ENCODE measurements at regions of chr9 and their contacts with region 1.

Region 1: DNA sequence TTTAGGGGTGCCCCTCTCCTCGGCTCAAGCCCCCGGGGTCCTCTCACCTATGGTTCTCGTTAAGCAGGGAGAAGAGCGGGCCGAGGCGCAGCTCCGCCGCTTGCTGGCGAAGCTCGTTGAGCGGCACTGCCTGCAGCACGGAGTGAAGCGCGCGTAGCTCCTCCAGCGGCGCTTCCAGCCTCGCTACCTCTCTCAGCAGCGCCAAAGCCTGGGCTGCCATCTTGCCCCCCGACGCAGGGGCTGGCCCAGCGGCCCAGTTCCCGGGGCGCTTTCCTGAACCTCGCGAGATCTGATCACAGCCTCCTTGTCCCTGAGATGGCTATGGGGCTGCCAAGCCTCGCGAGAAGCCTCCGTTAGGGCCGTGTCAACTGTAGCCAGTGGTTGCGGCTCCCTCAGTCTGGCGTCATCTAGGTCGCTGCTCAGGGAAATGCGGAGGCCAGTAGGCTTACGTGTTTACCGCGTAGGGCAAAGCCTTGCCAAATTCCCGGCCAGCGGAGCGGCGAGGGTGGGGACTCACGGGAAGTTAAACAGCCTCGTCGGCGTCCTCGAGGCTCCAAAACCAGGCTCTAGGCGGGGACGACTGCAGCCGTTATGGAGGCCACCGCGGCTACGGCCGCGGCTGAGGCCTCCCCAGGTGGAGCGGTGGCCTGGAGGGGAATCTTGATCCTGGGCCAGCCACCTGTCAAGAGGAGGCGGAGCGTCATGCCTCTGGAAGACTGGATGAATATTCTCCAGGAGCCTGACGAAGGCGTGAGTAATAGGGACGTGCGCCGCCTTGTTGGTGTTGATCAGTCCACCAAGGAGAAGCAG is at the start of gene PSMD5:
- DNase-seq: peak; percentile 100
- H3K4me3 Mint-ChIP-seq: peak within 1 kb of the TSS; percentile 95
- H3K27ac Mint-ChIP-seq: peak within 1 kb of the TSS; percentile 95
- H3K4me1 Mint-ChIP-seq: peaks cover 81% of the 10 kb centered on the region
- H3K27me3 Mint-ChIP-seq: no peaks in the 10 kb centered on the region
- total RNA-seq, gene PSMD5: 62.1 to 63.5 TPM

Region 2: GRCh38 chr9:120555839-120556238 is 287.1 kb before region 1 on chr9:
- CTCF ChIA-PET with region 1: no interaction called
- intact Hi-C with region 1: no loop called
- DNase-seq: no peak
- H3K4me3 Mint-ChIP-seq: no peak overlapping the region
- H3K27ac Mint-ChIP-seq: no peak overlapping the region
- H3K4me1 Mint-ChIP-seq: peaks cover 5% of the 10 kb centered on the region
- H3K27me3 Mint-ChIP-seq: no peaks in the 10 kb centered on the region

Region 3: GRCh38 chr9:120792898-120793765 is 49.8 kb before region 1 on chr9 and contains the start of gene FBXW2:
- CTCF ChIA-PET with region 1: no interaction called
- intact Hi-C with region 1: loop called (anchors 1 kb)
- DNase-seq: peak; percentile 92
- H3K4me3 Mint-ChIP-seq: peak within 1 kb of the TSS; percentile 88
- H3K27ac Mint-ChIP-seq: peak within 1 kb of the TSS; percentile 92
- H3K4me1 Mint-ChIP-seq: peaks cover 46% of the 10 kb centered on the region
- H3K27me3 Mint-ChIP-seq: no peaks in the 10 kb centered on the region
- total RNA-seq, gene FBXW2: 60.8 to 64.4 TPM

Region 4: GRCh38 chr9:120875954-120876841 is 33.3 kb after region 1 on chr9:
- CTCF ChIA-PET with region 1: interaction called, 4 read pairs
- intact Hi-C with region 1: loop called (anchors 1 kb)
- DNase-seq: peak; percentile 98
- H3K4me3 Mint-ChIP-seq: peak overlapping the region; percentile 85
- H3K27ac Mint-ChIP-seq: peak overlapping the region; percentile 98
- H3K4me1 Mint-ChIP-seq: peaks cover 75% of the 10 kb centered on the region
- H3K27me3 Mint-ChIP-seq: no peaks in the 10 kb centered on the region

Region 5: DNA sequence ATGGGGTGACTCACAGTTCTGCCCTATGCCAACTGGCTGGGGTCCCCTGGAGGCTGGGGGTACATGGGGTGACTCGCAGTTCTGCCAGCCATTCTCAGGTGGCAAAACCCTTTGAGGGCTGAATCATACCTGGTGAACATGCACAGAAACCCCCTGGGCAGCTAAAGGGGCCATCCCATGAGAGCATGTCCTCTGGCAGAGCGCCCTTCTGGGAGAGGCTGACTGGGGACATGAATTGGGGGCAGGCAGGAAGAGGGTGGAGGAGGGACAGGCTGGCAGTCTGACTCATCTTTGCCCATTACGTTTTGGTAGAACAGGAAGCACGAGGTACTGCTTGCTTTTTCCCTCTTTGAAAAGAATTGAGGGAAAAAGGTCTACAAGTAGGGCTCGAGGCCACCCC is 67.0 kb after region 1 on chr9:
- CTCF ChIA-PET with region 1: interaction called, 3 read pairs
- intact Hi-C with region 1: loop called (anchors 1 kb)
- DNase-seq: peak; percentile 89
- H3K4me3 Mint-ChIP-seq: no peak overlapping the region
- H3K27ac Mint-ChIP-seq: peak overlapping the region; percentile 94
- H3K4me1 Mint-ChIP-seq: peaks cover 91% of the 10 kb centered on the region
- H3K27me3 Mint-ChIP-seq: no peaks in the 10 kb centered on the region

Region 6: GRCh38 chr9:120965344-120966012 is 122.6 kb after region 1 on chr9:
- CTCF ChIA-PET with region 1: no interaction called
- intact Hi-C with region 1: no loop called
- DNase-seq: no peak
- H3K4me3 Mint-ChIP-seq: no peak overlapping the region
- H3K27ac Mint-ChIP-seq: no peak overlapping the region
- H3K4me1 Mint-ChIP-seq: no peaks in the 10 kb centered on the region
- H3K27me3 Mint-ChIP-seq: no peaks in the 10 kb centered on the region

Region 7: GRCh38 chr9:121074635-121075385 is 231.9 kb after region 1 on chr9 and contains the start of gene CNTRL:
- CTCF ChIA-PET with region 1: no interaction called
- intact Hi-C with region 1: loop called (anchors 1 kb)
- DNase-seq: peak; percentile 98
- H3K4me3 Mint-ChIP-seq: peak within 1 kb of the TSS; percentile 100
- H3K27ac Mint-ChIP-seq: peak within 1 kb of the TSS; percentile 94
- H3K4me1 Mint-ChIP-seq: peaks cover 47% of the 10 kb centered on the region
- H3K27me3 Mint-ChIP-seq: no peaks in the 10 kb centered on the region
- total RNA-seq, gene CNTRL: 59.4 to 63.6 TPM

Measured in activated naive CD4-positive, alpha-beta T cell treated with anti-CD3 and anti-CD28 coated beads for 36 hours (primary cell).